MCF 10A (cell line): ENCODE measurements at regions of chr1 and their contacts with region 1.

Region 1: DNA sequence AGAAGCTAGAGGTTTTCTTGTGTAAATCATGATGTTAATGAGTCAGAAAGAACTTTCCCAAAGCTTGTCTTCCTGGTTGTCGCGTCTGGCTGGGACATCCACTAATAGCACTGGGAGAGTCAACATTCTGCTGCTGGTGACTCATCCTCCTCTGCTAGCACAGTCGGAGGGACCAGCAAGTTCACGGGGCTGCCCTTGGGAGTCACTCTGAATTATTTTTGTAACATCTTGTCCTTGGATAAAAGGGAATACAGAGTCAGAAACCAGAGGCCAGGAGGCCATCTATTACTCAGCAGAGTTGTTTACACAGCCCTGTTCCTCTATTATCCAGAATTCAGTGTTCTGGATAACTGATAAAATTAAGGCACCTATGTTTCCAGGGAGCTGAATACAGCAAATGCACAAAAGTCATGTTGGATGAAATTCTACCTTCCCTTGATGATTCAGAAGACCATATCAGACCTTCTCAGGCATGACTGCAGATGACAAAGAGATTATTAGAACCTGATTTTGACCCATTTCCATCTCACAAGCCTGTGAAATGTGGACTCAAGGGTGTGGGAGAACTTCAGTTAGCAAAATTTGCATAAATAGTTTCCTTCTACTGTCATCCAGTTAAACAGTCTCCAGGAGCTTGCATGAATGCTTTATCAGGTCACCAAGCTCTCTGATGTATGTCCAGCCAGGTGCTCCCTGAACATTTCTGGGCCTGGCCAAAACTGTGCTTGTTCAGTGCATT is 68.1 kb downstream of the JAK1 start:
- DNase-seq: peak; percentile 93
- H3K4me3 Mint-ChIP-seq: peak overlapping the region; percentile 32
- H3K27ac Mint-ChIP-seq: no peak overlapping the region
- H3K4me1 Mint-ChIP-seq: peaks cover 34% of the 10 kb centered on the region
- H3K27me3 Mint-ChIP-seq: no peaks in the 10 kb centered on the region
- CTCF ChIP-seq: no peak

Region 2: DNA sequence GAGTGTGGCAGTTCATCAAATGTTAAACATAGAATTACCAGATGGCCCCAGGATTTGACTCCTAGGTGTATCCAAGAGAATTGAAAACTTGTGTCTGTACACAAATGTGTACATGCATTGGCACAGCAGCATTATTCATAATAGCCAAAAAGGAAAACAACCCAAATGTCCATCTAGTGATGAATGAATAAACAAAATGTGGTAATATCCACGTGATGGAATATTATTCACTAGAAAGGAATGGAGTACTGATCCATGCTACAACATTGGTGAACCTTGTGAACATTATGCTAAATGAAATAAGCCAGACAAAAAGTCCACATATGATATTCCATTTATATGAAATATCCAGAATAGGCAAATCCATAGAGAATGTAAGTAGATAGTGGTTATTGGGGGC is 75.7 kb before region 1 on chr1:
- CTCF ChIA-PET with region 1: no interaction called
- POLR2A ChIA-PET with region 1: no interaction called
- intact Hi-C with region 1: no loop called
- DNase-seq: peak; percentile 34
- H3K4me3 Mint-ChIP-seq: no peak overlapping the region
- H3K27ac Mint-ChIP-seq: peak overlapping the region; percentile 17
- H3K4me1 Mint-ChIP-seq: peaks cover 18% of the 10 kb centered on the region
- H3K27me3 Mint-ChIP-seq: no peaks in the 10 kb centered on the region
- CTCF ChIP-seq: no peak

Region 3: DNA sequence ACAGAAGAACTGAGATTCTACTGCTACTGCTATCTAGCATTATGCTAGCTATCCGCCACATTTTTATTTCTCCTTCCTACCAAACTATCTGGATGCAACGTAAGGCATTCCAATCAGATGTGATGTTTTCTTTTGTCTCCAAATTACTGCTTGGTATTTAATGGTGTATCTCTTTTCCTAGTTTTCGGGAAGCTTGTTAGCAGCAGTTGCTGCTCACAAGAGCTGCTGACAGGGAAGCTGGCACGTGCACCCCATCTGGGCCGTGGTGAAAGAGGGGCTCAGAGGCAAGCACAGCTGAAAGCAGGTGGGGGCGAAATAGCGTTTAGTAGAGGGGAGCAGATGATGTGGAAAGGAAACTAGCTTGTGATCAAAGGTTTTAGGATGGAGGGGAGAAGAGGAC is 10.8 kb after region 1 on chr1:
- CTCF ChIA-PET with region 1: interaction called, 4 read pairs
- POLR2A ChIA-PET with region 1: interaction called, 14 read pairs
- intact Hi-C with region 1: no loop called
- DNase-seq: no peak
- H3K4me3 Mint-ChIP-seq: no peak overlapping the region
- H3K27ac Mint-ChIP-seq: no peak overlapping the region
- H3K4me1 Mint-ChIP-seq: peaks cover 48% of the 10 kb centered on the region
- H3K27me3 Mint-ChIP-seq: no peaks in the 10 kb centered on the region
- CTCF ChIP-seq: no peak

Region 4: DNA sequence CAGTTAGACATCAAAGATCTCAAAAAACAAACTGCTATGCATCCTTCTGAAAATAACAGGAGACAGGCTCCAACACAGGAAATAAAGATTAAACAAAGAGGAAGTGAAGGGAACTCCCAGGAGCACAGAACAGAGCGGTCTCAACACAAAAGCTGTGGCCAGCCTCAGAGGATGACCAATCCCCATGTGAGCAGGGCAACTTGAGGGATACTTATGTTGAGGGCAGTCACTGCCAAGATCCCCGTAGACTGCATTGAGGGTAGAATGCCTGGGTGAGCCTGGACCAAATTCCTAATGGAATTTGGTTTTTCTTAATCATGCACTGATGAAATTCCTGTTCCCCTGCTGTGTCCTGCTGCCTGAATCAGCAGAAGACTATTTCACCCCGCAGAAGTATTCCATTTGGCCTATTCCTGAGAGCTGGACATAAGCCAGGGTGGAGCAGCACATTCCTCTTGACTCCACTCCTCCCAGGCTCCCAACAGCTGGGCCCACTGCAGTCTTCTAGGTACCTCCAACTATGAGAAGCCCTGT is 19.1 kb after region 1 on chr1:
- CTCF ChIA-PET with region 1: interaction called, 7 read pairs
- POLR2A ChIA-PET with region 1: interaction called, 16 read pairs
- intact Hi-C with region 1: no loop called
- DNase-seq: peak; percentile 93
- H3K4me3 Mint-ChIP-seq: no peak overlapping the region
- H3K27ac Mint-ChIP-seq: peak overlapping the region; percentile 80
- H3K4me1 Mint-ChIP-seq: peaks cover 49% of the 10 kb centered on the region
- H3K27me3 Mint-ChIP-seq: no peaks in the 10 kb centered on the region
- CTCF ChIP-seq: no peak

Region 5: DNA sequence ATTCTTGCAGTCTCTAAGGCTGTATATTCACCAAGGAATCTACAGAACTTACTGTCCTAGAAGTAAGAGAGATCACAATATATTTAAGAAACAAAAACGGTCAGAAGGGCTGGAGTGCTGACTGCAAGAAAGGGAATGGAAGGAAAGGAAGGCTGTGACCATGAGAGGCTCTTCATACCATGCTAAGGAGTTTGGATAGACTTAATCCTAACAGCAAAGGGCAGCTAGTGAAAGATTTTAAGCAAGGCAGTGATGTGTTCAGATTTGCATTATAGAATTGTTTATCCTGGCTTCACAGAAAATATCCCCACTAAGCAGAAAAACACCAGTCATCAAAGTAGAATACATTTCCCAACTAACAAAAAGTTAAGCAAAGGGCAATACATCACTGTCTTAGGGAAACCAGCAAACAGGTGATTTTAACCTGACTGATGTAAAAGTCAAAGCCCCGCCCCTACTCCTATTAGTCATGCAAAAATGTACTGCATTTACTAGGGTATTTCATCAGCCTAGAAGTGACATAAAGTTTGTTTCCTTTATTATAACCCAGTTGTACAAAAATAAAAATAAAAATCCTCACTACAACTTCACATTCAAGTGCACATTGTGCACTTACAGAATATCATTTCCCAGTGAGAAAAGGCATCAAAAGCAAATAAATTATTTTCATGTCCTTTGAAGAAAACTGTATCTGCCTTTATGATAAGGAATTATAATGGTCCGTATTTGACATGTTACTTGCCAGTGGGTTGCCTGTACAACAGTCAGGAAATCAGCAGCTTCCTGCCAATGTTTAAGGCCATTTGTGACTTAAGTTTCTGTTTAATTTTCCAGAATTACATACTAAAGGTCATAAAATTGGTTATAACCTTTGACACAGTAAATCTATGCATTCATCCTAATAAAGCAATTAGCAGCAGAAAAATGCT is 50.9 kb after region 1 on chr1:
- CTCF ChIA-PET with region 1: interaction called, 3 read pairs
- POLR2A ChIA-PET with region 1: interaction called, 11 read pairs
- intact Hi-C with region 1: no loop called
- DNase-seq: peak; percentile 79
- H3K4me3 Mint-ChIP-seq: peak overlapping the region; percentile 18
- H3K27ac Mint-ChIP-seq: peak overlapping the region; percentile 81
- H3K4me1 Mint-ChIP-seq: peaks cover 44% of the 10 kb centered on the region
- H3K27me3 Mint-ChIP-seq: no peaks in the 10 kb centered on the region
- CTCF ChIP-seq: no peak